Activated T-helper 2 cell treated with anti-CD3 and anti-CD28 coated beads, Interferon-gamma antibody, Interleukin-2, Interleukin-4, amounts not matched to agents 10 μg/mL and 5 μg/mL and 100 μg/mL, durations not matched to agents 14 hours and 24 hours and 36 hours (primary cell): ENCODE measurements at regions of chr13 and their contacts with region 1.

Region 1: DNA sequence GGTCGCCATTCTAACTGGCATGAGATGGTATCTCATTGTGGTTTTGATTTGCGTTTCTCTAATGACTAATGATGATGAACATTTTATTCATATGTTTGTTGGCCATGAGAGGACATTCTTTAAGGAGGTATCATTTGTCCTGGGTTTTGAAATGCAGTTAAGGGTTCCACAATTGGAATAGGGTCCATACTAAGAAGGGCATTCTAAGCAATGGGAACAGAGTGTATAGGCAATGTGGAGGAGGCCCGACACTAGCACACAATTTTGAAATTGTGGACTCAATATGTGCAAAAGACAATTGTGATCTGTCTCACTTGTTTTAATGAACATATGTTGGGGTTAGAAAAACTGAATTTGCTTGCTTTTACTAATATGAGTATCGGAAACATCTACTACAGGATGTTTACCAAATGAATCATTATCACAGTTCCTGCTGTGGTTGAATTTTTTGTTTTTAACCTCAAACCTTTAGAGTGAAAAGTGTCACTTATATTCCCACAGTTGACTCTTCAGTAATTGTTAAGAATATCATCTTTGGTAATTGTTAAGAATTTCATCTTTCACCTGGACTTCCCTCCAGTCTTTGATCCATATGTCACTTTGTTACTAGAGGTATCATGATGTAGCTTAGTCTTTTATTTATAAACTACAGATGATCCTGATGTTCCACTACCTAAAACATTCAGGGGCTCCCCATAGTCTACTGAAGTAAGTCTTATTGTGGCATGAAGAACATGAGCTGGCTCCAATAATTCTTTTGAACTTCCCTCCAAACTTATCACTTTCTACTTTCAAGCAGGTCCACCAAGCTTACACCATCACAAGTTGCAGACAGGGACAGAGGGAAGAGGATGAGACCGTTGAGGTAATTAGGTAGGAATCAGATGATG is 109.7 kb upstream of the KLF12 start:
- DNase-seq: no peak
- H3K4me3 Mint-ChIP-seq: peak overlapping the region; percentile 11
- H3K27ac Mint-ChIP-seq: peak overlapping the region; percentile 73
- H3K4me1 Mint-ChIP-seq: peaks cover 46% of the 10 kb centered on the region
- H3K27me3 Mint-ChIP-seq: peaks cover 15% of the 10 kb centered on the region

Region 2: GRCh38 chr13:73531014-73531413 is 712.9 kb before region 1 on chr13:
- intact Hi-C with region 1: no loop called
- DNase-seq: no peak
- H3K4me3 Mint-ChIP-seq: no peak overlapping the region
- H3K27ac Mint-ChIP-seq: no peak overlapping the region
- H3K4me1 Mint-ChIP-seq: no peaks in the 10 kb centered on the region
- H3K27me3 Mint-ChIP-seq: peaks cover 4% of the 10 kb centered on the region

Region 3: GRCh38 chr13:73924607-73925006 is 319.3 kb before region 1 on chr13:
- intact Hi-C with region 1: loop called (anchors 5 kb)
- DNase-seq: no peak
- H3K4me3 Mint-ChIP-seq: no peak overlapping the region
- H3K27ac Mint-ChIP-seq: peak overlapping the region; percentile 72
- H3K4me1 Mint-ChIP-seq: peaks cover 58% of the 10 kb centered on the region
- H3K27me3 Mint-ChIP-seq: no peaks in the 10 kb centered on the region

Region 4: DNA sequence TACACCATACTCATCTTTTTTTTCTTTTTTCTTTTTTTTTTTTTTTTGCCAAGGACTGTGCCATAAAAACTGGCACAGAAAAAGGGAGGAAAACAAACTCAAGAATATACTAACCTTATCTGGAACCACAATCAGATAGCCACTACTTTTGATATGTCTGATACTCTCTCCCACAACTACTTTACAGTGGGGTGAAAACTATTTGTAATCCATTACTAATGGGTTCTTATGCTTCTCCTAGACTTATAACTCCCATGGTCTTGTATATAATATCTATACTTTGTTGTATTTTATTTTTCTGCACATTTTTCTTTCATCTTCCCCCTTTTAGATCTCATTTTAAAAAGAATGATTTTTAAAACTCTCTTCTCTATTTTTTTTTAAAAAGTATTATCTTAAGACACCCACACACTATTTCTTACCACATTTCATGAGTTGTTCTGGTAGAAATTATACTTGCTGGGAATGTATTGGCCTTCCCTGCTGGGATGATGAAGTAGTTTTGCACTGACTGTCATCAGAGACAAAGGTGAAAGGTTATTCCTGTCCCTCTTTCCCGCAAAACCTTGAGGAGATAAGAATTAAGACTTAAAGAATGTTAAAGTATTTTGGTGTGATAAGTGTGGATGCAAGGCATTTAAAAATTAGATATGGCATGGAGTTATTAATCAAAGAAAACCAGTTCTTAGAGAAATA is 37.1 kb after region 1 on chr13:
- intact Hi-C with region 1: loop called (anchors 2 kb)
- DNase-seq: no peak
- H3K4me3 Mint-ChIP-seq: no peak overlapping the region
- H3K27ac Mint-ChIP-seq: no peak overlapping the region
- H3K4me1 Mint-ChIP-seq: peaks cover 17% of the 10 kb centered on the region
- H3K27me3 Mint-ChIP-seq: peaks cover 56% of the 10 kb centered on the region